Right ventricle myocardium superior (tissue), 1 donor: ENCODE measurements at regions of chr20 and their contacts with region 1.

Region 1: DNA sequence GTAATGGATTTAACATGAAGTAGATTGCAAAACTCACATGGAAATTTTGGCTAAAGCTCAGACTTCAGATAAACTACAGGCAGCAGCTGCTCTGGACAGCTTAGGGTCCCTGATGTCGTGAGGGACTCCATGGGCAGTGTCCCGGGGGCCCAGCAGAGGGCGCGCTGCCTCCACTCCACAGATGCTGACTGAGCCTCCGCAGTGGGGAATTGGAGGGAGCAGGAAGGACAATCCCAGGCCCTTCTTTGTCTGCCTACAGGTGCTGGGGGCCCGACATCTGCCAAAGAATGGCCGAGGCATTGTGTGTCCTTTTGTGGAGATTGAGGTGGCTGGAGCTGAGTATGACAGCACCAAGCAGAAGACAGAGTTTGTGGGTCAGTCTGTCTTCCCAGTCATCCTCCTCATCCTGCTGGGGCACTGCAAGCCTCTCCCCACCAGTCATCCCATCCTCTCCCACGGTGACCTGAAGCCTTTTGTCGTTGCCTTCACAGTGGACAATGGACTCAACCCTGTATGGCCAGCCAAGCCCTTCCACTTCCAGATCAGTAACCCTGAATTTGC is 35.9 kb downstream of the PLCG1 start:
- DNase-seq: peak; percentile 93
- ATAC-seq: peak; percentile 88

Region 2: GRCh38 chr20:41232973-41233926 is 60.0 kb after region 1 on chr20:
- intact Hi-C with region 1: loop called (anchors 2 kb)
- DNase-seq: no peak
- ATAC-seq: peak; percentile 36

Region 3: DNA sequence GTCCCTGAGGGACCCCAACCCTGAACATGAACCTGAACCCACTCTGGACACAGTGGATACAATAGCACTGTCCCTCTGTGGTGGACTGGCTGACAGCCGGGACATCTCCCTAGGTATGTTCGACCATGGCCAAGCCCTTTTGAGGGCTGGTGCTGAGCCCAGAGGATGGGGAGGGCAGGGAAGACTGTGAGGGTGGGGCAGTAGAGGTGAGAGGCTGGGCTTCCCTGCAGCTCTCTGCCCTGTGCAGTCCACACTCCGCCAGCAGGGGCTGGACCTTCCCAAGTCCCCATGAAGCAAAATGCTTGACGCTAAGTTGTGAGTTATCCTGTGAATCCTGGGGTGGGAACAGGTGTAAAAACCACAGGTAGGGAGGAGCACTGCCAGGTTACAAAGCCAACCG is 178.9 kb after region 1 on chr20:
- intact Hi-C with region 1: no loop called
- DNase-seq: no peak
- ATAC-seq: no peak

Region 4: GRCh38 chr20:41411391-41411847 is 238.2 kb after region 1 on chr20:
- intact Hi-C with region 1: loop called (anchors 5 kb)
- DNase-seq: no peak
- ATAC-seq: peak; percentile 75